ENCODE measurements at regions of chr4 and their contacts with region 1.

Region 1: GRCh38 chr4:18593445-18594002 is 572.0 kb upstream of the LCORL start:
- DNase-seq: peak; percentile 12
- H3K4me3 ChIP-seq: peak overlapping the region; percentile 15; the same call in 1 of the 2 replicates
- CTCF ChIP-seq: peak; percentile 68

Region 2: DNA sequence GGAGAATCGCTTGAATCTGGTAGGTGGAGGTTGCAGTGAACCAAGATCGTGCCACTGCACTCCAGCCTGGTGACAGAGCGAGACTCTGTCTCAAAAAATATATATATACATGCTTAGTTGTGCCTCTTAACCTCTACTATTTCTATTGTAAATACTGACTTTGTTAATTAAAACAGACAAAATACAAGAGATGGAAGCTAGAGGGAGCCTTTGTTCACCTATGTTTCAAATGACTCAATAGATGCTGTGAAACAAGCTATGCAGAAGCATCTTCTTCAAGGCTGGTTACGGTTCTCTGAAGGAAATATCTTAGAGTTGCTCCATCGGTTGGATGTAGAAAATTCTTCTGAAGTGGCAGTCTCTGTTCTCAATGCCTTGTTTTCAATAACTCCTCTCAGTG is 776.5 kb before region 1 on chr4:
- CTCF ChIA-PET with region 1: interaction called, 25 read pairs
- POLR2A ChIA-PET with region 1: no interaction called
- DNase-seq: peak; percentile 47
- H3K4me3 ChIP-seq: no peak overlapping the region
- CTCF ChIP-seq: peak; percentile 54

Measured in AG04449 (cell line).